Mammary epithelial cell (primary cell): ENCODE measurements at regions of chr5 and their contacts with region 1.

Region 1: DNA sequence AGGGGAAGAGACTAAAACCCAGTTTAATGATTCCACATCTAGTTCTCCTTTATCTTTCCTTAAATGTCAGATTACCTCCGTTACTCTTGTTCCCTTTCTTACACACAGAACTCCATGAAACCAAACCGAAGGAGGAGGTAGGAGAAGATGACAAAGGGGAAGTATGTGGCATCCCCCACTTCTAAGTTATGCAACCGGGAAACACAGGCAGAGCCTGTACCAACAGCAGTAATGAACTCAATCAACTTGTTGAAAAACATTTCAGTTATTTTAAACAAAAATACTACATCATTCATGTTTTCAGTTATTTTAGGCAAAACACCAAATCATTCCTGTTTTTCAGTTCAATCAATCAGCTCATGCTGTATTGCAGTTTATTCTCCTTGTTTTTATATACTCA is 101.8 kb downstream of the PCSK1 start:
- DNase-seq: peak; percentile 35
- H3K4me3 ChIP-seq: no peak overlapping the region
- H3K27ac ChIP-seq: no peak overlapping the region
- H3K4me1 ChIP-seq: peaks cover 34% of the 10 kb centered on the region
- H3K27me3 ChIP-seq: no peaks in the 10 kb centered on the region
- CTCF ChIP-seq: no peak

Region 2: DNA sequence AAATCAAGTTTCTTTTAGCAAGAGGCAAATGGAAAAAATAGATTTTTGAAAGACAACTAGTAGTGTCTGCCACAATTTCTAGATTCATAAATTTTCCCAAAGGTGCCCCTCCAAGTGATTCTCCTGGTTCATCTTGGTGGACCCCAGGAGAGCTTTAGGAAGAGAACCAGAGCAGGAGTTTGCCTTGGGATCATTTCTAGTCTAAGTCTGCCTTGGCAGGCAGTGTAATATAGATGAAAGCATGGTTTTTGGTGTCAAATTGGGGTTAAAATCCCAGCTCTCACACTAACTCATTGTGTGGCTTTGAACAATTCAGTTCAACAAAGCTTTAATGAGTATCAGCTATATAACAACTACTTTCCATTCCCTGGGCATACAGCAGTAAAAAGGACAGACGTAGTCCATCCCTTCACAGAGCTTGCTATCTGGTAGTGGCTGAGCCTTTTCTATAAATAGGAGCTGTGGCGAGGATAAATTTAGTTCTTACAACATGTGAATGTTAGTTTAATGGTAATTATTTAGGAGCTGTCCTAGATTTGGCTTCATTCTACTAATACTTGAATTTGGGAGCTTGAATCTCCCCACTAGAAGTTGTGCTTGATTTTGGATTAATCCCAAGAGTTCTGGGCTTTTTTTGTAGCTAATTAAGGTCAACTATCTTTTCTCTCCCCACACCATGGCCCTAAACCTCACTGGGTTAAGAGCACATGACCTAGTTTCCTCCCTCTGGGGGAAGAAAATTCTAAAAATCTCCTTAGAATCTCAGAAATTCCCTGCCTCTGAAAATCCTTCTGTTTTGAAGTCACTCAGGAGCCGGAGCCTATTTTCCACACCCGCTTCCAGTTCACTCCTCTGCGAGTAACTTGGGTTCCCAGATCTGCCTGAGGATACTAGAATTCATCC is 96.0 kb before region 1 on chr5:
- CTCF ChIA-PET with region 1: no interaction called
- dilution Hi-C with region 1: loop called (anchors 5 kb)
- in situ Hi-C with region 1: no loop called
- intact Hi-C with region 1: no loop called
- DNase-seq: no peak
- H3K4me3 ChIP-seq: no peak overlapping the region
- H3K27ac ChIP-seq: no peak overlapping the region
- H3K4me1 ChIP-seq: no peaks in the 10 kb centered on the region
- H3K27me3 ChIP-seq: no peaks in the 10 kb centered on the region
- CTCF ChIP-seq: no peak

Region 3: GRCh38 chr5:97388794-97389193 is 1057.6 kb after region 1 on chr5:
- CTCF ChIA-PET with region 1: no interaction called
- dilution Hi-C with region 1: no loop called
- in situ Hi-C with region 1: no loop called
- intact Hi-C with region 1: no loop called
- DNase-seq: no peak
- H3K4me3 ChIP-seq: no peak overlapping the region
- H3K27ac ChIP-seq: no peak overlapping the region
- H3K4me1 ChIP-seq: no peaks in the 10 kb centered on the region
- H3K27me3 ChIP-seq: no peaks in the 10 kb centered on the region
- CTCF ChIP-seq: no peak